ENCODE measurements at regions of chr18 and their contacts with region 1.

Region 1: GRCh38 chr18:5879479-5879882 is 15.8 kb downstream of the TMEM200C start:
- DNase-seq: no peak
- H3K4me3 Mint-ChIP-seq: no peak overlapping the region
- H3K27ac Mint-ChIP-seq: no peak overlapping the region
- H3K4me1 Mint-ChIP-seq: no peaks in the 10 kb centered on the region
- H3K27me3 Mint-ChIP-seq: peaks cover 24% of the 10 kb centered on the region

Region 2: GRCh38 chr18:5630057-5630899 is 249.2 kb before region 1 on chr18:
- CTCF ChIA-PET with region 1: no interaction called
- intact Hi-C with region 1: no loop called
- DNase-seq: peak; percentile 56
- H3K4me3 Mint-ChIP-seq: peak overlapping the region; percentile 69
- H3K27ac Mint-ChIP-seq: no peak overlapping the region
- H3K4me1 Mint-ChIP-seq: no peaks in the 10 kb centered on the region
- H3K27me3 Mint-ChIP-seq: peaks cover 30% of the 10 kb centered on the region

Region 3: GRCh38 chr18:5943514-5943913 is 64.0 kb after region 1 on chr18:
- CTCF ChIA-PET with region 1: no interaction called
- intact Hi-C with region 1: no loop called
- DNase-seq: no peak
- H3K4me3 Mint-ChIP-seq: no peak overlapping the region
- H3K27ac Mint-ChIP-seq: no peak overlapping the region
- H3K4me1 Mint-ChIP-seq: no peaks in the 10 kb centered on the region
- H3K27me3 Mint-ChIP-seq: peaks cover 8% of the 10 kb centered on the region

Region 4: GRCh38 chr18:6221602-6222014 is 342.1 kb after region 1 on chr18:
- CTCF ChIA-PET with region 1: no interaction called
- intact Hi-C with region 1: loop called (anchors 5 kb)
- DNase-seq: no peak
- H3K4me3 Mint-ChIP-seq: no peak overlapping the region
- H3K27ac Mint-ChIP-seq: no peak overlapping the region
- H3K4me1 Mint-ChIP-seq: no peaks in the 10 kb centered on the region
- H3K27me3 Mint-ChIP-seq: peaks cover 2% of the 10 kb centered on the region

Region 5: DNA sequence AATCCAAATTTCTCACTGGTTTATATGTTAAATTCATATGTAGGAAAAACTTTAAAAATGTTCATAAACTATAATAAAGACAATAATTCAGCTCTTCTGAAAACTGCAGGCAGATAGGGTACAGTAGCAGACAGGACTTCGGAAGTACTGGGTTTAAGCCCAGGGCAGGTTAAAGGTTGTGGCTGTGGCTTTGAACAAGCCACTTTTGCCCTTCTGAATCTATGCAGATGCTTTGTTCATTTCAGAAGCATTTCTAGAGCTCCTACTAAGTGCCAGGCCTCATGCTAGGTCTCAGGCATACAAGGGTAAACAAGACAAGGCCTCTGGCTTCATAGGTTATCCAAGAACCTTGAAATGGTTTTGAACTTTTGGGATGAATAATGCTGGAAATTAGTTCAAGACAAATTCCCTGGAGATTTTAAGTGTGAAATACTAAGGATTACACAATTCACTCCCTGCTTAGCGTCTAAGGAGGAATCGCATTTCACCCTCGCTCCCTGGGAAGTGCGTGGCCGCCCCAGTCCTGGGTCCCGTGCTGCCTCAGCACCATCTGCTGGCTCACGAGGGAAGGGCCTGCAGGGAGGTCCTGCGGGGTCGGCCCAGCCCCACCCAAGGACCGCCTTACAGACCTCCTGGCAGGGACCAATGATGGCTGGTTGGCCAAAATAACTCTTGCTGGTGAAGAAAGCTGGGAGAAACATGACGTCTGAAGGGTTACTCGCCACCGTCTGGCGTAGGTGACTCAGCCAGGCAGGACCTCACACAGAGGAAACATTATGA is 602.9 kb after region 1 on chr18:
- CTCF ChIA-PET with region 1: no interaction called
- intact Hi-C with region 1: loop called (anchors 5 kb)
- DNase-seq: no peak
- H3K4me3 Mint-ChIP-seq: no peak overlapping the region
- H3K27ac Mint-ChIP-seq: no peak overlapping the region
- H3K4me1 Mint-ChIP-seq: no peaks in the 10 kb centered on the region
- H3K27me3 Mint-ChIP-seq: no peaks in the 10 kb centered on the region

Region 6: GRCh38 chr18:6521795-6522418 is 642.4 kb after region 1 on chr18:
- CTCF ChIA-PET with region 1: interaction called, 3 read pairs
- intact Hi-C with region 1: loop called (anchors 1 kb)
- DNase-seq: peak; percentile 38
- H3K4me3 Mint-ChIP-seq: no peak overlapping the region
- H3K27ac Mint-ChIP-seq: no peak overlapping the region
- H3K4me1 Mint-ChIP-seq: no peaks in the 10 kb centered on the region
- H3K27me3 Mint-ChIP-seq: peaks cover 9% of the 10 kb centered on the region

Region 7: DNA sequence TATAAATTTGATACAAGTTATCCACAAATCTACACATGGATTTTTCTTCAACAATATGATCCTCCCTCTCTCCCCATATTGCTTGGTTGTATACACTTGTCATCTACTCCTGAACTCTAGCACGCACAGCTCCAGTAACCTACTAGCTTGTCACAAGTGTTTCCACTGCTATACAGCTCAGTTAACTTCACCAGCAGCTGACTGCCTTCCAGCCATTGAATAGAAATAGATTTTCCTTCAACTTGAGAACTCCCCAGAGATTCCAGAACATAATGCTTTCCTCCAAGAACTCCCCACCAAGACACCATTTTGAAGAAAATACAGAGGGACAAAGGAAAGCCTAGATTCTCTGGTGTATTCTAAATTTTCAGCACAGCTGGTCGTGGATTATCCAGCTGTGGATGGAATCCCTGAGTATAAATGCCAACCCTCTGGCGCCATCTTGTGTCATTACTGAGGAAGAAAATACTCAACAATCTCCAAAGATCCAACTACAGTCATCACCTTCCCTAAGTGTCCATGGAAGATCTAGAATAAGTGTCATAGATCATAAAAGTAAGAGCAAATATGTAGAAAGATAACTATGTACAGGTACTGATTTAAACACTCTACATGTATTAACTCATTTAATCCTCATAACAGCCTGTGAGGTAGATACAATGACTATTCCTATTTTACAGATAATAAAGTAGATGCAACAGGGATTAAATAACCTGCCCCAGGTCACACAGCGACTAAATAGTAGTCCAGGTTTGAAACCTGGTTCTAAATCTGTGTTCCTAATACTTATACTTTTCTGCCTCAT is 1006.7 kb after region 1 on chr18:
- CTCF ChIA-PET with region 1: no interaction called
- intact Hi-C with region 1: loop called (anchors 2 kb)
- DNase-seq: peak; percentile 33
- H3K4me3 Mint-ChIP-seq: no peak overlapping the region
- H3K27ac Mint-ChIP-seq: no peak overlapping the region
- H3K4me1 Mint-ChIP-seq: no peaks in the 10 kb centered on the region
- H3K27me3 Mint-ChIP-seq: no peaks in the 10 kb centered on the region